ENCODE measurements at regions of chr6 and their contacts with region 1.

Region 1: DNA sequence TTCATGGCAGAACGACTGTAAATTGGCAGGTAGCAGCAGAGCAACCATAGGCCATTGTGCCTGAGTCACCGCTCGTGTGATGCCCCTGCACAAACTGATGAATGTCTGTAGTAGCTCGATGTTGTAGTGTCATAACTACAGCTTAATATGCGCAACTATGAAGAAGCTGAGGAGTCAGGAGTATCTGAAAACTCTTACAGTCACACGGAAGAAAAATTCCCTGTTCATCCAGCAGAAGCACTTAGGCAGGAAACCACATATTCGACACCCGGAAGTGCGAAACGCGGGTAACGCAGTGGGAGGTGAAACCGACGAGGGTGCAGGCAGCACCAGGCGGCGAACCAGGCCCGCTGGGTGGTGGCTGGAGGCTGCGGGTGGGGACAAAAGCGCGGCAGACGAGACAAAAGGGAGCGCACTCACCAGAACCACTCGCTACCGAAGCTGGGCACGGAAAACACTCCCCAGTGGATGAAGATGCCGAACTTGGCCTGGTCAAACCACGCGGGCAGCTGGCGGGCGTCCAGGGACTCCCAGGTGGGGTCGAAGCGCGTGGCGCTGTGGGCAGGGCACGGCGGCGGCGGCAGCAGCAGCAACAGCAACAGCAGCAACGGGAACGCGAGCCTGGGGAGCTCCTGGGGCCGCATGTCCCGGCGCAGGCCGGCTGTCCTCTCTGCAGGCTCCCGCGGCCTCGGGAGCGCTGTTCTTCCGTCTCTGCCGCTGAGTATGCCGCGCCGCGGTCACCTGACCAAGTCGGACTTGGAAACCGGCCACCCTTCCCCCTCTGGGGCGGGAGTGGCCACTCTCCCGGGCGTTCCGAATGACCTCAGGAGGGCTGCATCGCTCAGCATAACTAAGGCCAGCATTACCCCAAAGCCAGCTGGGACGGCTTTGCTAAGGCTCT is at the start of gene FUCA2:
- DNase-seq: peak; percentile 69
- CTCF ChIP-seq: no peak

Region 2: DNA sequence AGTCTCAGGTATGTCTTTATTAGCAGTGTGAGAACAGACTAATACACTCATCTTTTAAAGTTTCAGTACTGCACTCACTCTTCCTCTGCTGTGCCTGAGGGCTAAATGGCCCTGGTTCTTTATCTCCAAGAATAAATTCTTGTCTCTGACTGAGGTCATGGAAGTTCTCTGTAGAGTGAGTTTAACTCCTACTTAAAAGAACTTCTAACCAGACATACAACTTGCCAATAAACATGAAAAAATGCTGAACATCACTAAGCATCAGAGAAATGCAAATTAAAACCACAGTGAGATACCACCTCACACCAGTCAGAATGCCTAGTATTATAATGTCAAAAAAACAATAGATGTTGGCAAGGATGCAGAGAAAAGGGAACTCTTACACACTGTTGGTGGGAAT is 134.4 kb before region 1 on chr6:
- CTCF ChIA-PET with region 1: no interaction called
- POLR2A ChIA-PET with region 1: no interaction called
- DNase-seq: no peak
- CTCF ChIP-seq: no peak

Region 3: GRCh38 chr6:143496974-143497373 is 14.3 kb before region 1 on chr6:
- CTCF ChIA-PET with region 1: interaction called, 15 read pairs
- POLR2A ChIA-PET with region 1: no interaction called
- DNase-seq: no peak
- CTCF ChIP-seq: no peak

Region 4: DNA sequence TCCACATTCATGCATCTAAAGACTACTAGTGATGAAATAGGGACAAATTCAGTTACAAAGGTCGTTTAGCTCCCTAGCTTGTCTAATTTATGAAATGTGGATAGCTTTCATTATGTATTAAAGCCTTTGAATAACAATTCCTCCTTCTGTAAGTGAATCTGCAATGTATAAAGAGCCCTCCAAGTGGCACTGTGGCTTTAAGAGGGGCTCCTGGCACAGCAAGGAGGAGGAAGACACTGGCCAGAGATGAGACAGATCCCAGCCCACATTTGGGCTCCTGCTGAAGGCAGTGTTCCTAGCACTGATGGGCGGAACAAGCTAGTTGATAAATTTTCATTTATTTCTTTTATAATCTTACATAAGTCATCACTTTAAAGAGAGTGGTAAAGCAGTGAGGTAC is 17.9 kb after region 1 on chr6:
- CTCF ChIA-PET with region 1: interaction called, 37 read pairs
- POLR2A ChIA-PET with region 1: no interaction called
- DNase-seq: no peak
- CTCF ChIP-seq: no peak

Region 5: DNA sequence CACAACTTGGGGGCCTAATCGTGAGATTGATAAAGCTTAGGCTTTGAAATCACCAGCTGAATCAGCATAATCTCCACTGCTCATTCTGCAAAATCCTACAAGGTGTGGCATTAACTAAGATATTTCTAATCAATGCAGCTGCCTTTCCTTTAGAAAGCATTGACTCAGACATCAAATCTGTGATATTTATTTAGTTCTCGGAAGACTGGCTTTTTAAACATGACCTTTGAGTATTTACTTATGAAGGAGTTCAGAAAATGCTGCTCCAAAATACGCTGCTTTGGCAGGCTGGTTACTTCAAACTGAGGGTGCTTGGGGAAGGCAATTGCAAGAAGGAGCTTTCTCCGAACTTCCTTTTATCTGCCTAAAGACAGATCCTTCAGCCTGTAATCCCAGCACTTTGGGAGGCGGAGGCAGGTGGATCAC is 24.0 kb after region 1 on chr6:
- CTCF ChIA-PET with region 1: interaction called, 19 read pairs
- POLR2A ChIA-PET with region 1: no interaction called
- DNase-seq: no peak
- CTCF ChIP-seq: no peak

Region 6: GRCh38 chr6:143542888-143543287 is 31.6 kb after region 1 on chr6:
- CTCF ChIA-PET with region 1: interaction called, 19 read pairs
- POLR2A ChIA-PET with region 1: no interaction called
- DNase-seq: no peak
- CTCF ChIP-seq: no peak

Region 7: DNA sequence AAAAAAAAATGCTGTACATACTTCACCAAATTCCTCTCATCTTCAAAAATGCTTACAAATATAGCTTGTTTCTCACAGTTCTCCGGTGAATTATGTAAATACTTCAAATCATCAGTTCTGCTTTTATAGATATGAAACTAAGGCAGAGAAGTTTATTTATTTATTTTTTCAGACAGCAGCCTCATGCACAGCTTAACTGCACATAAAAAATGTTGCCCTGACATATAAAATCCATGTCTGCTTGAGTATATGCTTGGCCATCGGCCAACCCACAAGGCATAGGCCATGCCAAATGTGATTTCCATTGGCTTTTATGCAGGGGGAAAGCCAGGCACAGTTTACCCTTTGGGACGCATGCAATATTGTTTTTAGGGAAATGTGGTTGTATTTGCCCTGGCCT is 109.2 kb after region 1 on chr6:
- CTCF ChIA-PET with region 1: no interaction called
- POLR2A ChIA-PET with region 1: no interaction called
- DNase-seq: no peak
- CTCF ChIP-seq: no peak

Region 8: DNA sequence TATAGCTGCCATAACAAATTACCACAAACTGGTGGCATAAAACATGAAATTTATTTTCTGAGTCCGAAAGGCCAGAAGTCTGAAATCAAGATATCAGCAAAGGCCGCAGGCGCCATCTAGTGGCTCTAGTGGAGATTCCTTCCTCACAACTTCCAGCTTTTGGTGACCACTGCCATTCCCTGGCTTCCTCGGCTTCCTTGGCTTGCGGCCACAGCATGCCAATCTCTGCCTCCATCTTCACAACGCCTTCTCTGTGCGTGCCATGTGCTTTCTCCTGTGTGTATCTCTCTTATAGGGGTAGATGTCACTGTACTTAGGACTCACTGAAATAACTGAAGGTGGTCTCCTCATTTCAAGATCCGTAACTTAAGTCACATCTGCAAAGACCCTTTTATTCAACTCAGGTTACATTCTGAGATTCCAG is 502.3 kb after region 1 on chr6:
- CTCF ChIA-PET with region 1: interaction called, 32 read pairs
- POLR2A ChIA-PET with region 1: no interaction called
- DNase-seq: peak; percentile 50
- CTCF ChIP-seq: peak; percentile 85